ENCODE measurements at regions of chr20 and their contacts with region 1.

Region 1: GRCh38 chr20:53773792-53774401 is 180.3 kb upstream of the ZNF217 start:
- DNase-seq: no peak
- ATAC-seq: no peak
- H3K4me3 ChIP-seq: no peak overlapping the region
- H3K4me3 Mint-ChIP-seq: no peak overlapping the region
- H3K27ac ChIP-seq: no peak overlapping the region
- H3K27ac Mint-ChIP-seq: no peak overlapping the region
- H3K4me1 ChIP-seq: no peaks in the 10 kb centered on the region
- H3K4me1 Mint-ChIP-seq: no peaks in the 10 kb centered on the region
- H3K27me3 ChIP-seq: no peaks in the 10 kb centered on the region
- H3K27me3 Mint-ChIP-seq: no peaks in the 10 kb centered on the region
- CTCF ChIP-seq: no peak

Region 2: DNA sequence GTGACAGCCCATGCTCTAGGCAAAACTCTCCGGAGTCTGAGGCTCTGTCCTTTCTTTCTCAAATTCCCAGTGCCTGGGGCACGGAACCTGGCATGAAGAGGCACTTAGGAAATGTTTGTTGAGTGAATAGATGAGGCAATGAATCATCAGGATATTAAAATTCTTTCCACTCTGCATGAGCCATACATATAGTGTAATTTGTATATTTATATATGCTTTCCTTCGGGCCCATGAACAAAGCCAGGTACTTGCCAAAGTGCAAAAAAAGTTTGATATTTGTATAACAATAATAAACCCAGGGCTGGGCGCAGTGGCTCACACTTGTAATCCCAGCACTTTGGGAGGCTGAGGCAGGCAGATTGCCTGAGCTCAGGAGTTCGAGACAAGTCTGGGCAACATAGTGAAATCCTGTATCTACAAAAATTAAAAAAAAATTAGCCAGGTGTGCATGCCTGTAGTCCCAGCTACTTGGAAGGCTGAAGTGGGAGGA is 32.0 kb after region 1 on chr20:
- CTCF ChIA-PET with region 1: no interaction called
- POLR2A ChIA-PET with region 1: no interaction called
- intact Hi-C with region 1: no loop called
- DNase-seq: no peak
- ATAC-seq: no peak
- H3K4me3 ChIP-seq: no peak overlapping the region
- H3K4me3 Mint-ChIP-seq: no peak overlapping the region
- H3K27ac ChIP-seq: no peak overlapping the region
- H3K27ac Mint-ChIP-seq: no peak overlapping the region
- H3K4me1 ChIP-seq: no peaks in the 10 kb centered on the region
- H3K4me1 Mint-ChIP-seq: no peaks in the 10 kb centered on the region
- H3K27me3 ChIP-seq: no peaks in the 10 kb centered on the region
- H3K27me3 Mint-ChIP-seq: no peaks in the 10 kb centered on the region
- CTCF ChIP-seq: no peak

Region 3: GRCh38 chr20:53819973-53820451 is 46.1 kb after region 1 on chr20:
- CTCF ChIA-PET with region 1: interaction called, 3 read pairs
- POLR2A ChIA-PET with region 1: no interaction called
- intact Hi-C with region 1: loop called (anchors 5 kb)
- DNase-seq: no peak
- ATAC-seq: no peak
- H3K4me3 ChIP-seq: no peak overlapping the region
- H3K4me3 Mint-ChIP-seq: no peak overlapping the region
- H3K27ac ChIP-seq: no peak overlapping the region
- H3K27ac Mint-ChIP-seq: no peak overlapping the region
- H3K4me1 ChIP-seq: no peaks in the 10 kb centered on the region
- H3K4me1 Mint-ChIP-seq: peaks cover under 1% of the 10 kb centered on the region
- H3K27me3 ChIP-seq: no peaks in the 10 kb centered on the region
- H3K27me3 Mint-ChIP-seq: no peaks in the 10 kb centered on the region
- CTCF ChIP-seq: no peak